WTC11 (cell line): ENCODE measurements at regions of chr10 and their contacts with region 1.

Region 1: GRCh38 chr10:70221030-70221429 is 12.2 kb downstream of the PPA1 start:
- DNase-seq: no peak
- ATAC-seq: no peak
- H3K4me3 Mint-ChIP-seq: no peak overlapping the region
- H3K27ac Mint-ChIP-seq: no peak overlapping the region
- H3K4me1 Mint-ChIP-seq: peaks cover 3% of the 10 kb centered on the region
- H3K27me3 Mint-ChIP-seq: no peaks in the 10 kb centered on the region
- CTCF ChIP-seq: no peak

Region 2: GRCh38 chr10:70093335-70093944 is 127.6 kb before region 1 on chr10:
- CTCF ChIA-PET with region 1: no interaction called
- POLR2A ChIA-PET with region 1: no interaction called
- DNase-seq: no peak
- ATAC-seq: no peak
- H3K4me3 Mint-ChIP-seq: no peak overlapping the region
- H3K27ac Mint-ChIP-seq: no peak overlapping the region
- H3K4me1 Mint-ChIP-seq: no peaks in the 10 kb centered on the region
- H3K27me3 Mint-ChIP-seq: no peaks in the 10 kb centered on the region
- CTCF ChIP-seq: no peak

Region 3: GRCh38 chr10:70233109-70233938 is 12.3 kb after region 1 on chr10 and contains the start of gene PPA1:
- CTCF ChIA-PET with region 1: interaction called, 48 read pairs
- POLR2A ChIA-PET with region 1: interaction called, 4 read pairs
- DNase-seq: peak; percentile 99
- ATAC-seq: peak; percentile 95
- H3K4me3 Mint-ChIP-seq: peak within 1 kb of the TSS; percentile 92
- H3K27ac Mint-ChIP-seq: peak within 1 kb of the TSS; percentile 73
- H3K4me1 Mint-ChIP-seq: peaks cover 8% of the 10 kb centered on the region
- H3K27me3 Mint-ChIP-seq: no peaks in the 10 kb centered on the region; the same call in 1 of the 2 replicates
- CTCF ChIP-seq: no peak
- total RNA-seq, gene PPA1: 140 to 180 TPM (median 144 TPM) in 3 replicates

Region 4: DNA sequence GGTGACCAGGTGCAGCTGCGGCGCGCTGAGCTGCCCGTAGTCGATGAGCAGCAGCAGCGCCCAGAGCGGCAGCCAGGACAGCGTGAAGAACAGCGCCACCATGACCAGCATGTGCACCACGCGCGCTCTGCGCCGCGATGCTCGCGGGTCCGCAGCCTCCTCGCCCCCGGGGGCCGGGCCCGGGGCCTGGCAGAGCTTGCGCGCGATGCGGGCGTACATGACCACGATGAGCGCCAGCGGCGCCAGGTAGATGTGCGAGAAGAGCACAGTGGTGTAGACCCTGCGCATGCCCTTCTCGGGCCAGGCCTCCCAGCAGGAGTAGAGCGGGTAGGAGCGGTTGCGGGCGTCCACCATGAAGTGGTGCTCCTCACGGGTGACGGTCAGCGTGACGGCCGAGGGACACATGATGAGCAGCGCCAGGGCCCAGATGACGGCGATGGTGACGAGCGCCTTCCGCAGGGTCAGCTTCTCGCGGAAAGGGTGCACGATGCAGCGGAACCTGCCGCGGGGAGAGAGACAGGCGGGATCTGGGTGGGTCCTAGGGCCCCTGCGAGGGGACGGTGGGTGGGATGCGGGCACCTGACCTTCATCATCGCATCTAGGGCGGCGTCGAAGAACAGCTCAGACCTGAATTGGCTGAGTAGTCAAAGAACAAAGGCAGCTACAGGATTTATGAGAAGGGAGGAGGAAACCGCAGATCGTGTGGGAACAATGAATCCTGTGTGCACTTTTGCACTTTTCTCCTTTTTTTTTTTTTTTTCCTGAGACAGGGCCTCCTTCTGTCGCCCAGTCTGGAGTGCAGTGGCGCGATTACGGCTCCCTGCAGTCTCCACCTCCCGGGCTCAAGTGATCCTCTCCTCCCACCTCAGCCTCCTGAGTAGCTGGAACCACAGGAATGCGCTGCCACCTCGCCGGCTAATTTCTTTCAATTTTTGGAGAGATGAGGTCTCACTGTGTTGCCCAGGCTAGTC is 34.6 kb after region 1 on chr10:
- CTCF ChIA-PET with region 1: interaction called, 16 read pairs
- POLR2A ChIA-PET with region 1: no interaction called
- DNase-seq: no peak
- ATAC-seq: no peak; the same call in 1 of the 2 replicates
- H3K4me3 Mint-ChIP-seq: no peak overlapping the region
- H3K27ac Mint-ChIP-seq: no peak overlapping the region
- H3K4me1 Mint-ChIP-seq: 0 out of 2 replicates have a peak, but pooled peaks cover 5% of the 10 kb centered on the region
- H3K27me3 Mint-ChIP-seq: peaks cover 6% of the 10 kb centered on the region; the same call in 1 of the 2 replicates
- CTCF ChIP-seq: no peak

Region 5: GRCh38 chr10:70272925-70273316 is 51.9 kb after region 1 on chr10:
- CTCF ChIA-PET with region 1: interaction called, 16 read pairs
- POLR2A ChIA-PET with region 1: no interaction called
- DNase-seq: no peak
- ATAC-seq: no peak
- H3K4me3 Mint-ChIP-seq: no peak overlapping the region
- H3K27ac Mint-ChIP-seq: no peak overlapping the region
- H3K4me1 Mint-ChIP-seq: peaks cover 16% of the 10 kb centered on the region
- H3K27me3 Mint-ChIP-seq: no peaks in the 10 kb centered on the region
- CTCF ChIP-seq: no peak

Region 6: GRCh38 chr10:70348228-70348850 is 127.3 kb after region 1 on chr10:
- CTCF ChIA-PET with region 1: interaction called, 48 read pairs
- POLR2A ChIA-PET with region 1: no interaction called
- DNase-seq: peak; percentile 64
- ATAC-seq: peak; percentile 98
- H3K4me3 Mint-ChIP-seq: no peak overlapping the region
- H3K27ac Mint-ChIP-seq: no peak overlapping the region
- H3K4me1 Mint-ChIP-seq: no peaks in the 10 kb centered on the region
- H3K27me3 Mint-ChIP-seq: no peaks in the 10 kb centered on the region
- CTCF ChIP-seq: no peak; the same call in 1 of the 2 replicates

Region 7: GRCh38 chr10:70355051-70356021 is 134.3 kb after region 1 on chr10:
- CTCF ChIA-PET with region 1: interaction called, 48 read pairs
- POLR2A ChIA-PET with region 1: no interaction called
- DNase-seq: no peak
- ATAC-seq: no peak
- H3K4me3 Mint-ChIP-seq: no peak overlapping the region
- H3K27ac Mint-ChIP-seq: peak overlapping the region; percentile 71; the same call in 1 of the 2 replicates
- H3K4me1 Mint-ChIP-seq: peaks cover 11% of the 10 kb centered on the region
- H3K27me3 Mint-ChIP-seq: no peaks in the 10 kb centered on the region
- CTCF ChIP-seq: no peak

Region 8: DNA sequence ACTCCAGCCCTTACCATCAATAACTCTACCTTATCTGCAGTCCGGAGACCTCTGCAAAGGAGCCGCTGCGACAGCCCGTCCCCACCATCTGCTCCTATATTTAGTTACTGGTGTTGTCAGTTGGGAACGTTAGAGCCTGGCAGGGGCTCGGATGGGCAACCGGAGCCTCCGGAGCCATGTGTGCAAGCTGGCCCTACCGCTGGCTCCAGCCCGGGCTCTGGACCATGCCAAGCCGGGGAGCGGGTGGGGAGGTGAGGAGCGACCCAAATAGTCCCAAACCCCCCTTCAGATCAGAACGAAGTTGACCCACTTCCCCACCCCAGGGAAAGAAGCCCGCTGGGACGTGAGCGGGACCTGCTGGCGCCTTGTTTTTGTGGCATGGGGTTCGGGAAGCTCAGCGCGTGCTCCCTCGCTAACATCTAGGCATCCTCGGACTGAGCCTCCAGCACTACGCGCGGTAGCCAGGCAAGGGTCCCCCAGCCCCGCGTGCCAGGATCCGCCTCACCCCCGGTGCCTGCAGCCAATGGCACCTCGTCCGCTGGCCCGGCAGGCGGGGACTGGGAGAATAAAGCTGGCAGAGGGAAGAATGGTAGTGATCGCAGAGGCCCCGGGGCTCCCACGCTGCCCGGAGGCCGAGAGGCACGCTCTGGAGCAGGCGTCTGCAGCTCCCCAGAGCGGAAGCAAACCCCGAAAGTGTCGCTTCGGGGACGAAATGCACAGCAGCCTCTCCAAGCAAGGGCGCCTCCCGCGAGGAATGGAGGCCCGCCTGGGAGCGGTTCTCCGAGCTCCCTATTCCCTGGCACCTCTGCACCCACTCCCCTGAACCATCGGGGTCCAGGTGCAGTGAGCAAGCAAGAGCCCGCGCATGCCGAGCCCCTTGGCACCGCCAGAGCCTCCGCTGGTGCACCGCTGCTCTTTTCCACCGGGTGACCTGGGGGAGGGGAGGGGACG is 160.7 kb after region 1 on chr10:
- CTCF ChIA-PET with region 1: interaction called, 28 read pairs
- POLR2A ChIA-PET with region 1: no interaction called
- DNase-seq: peak; percentile 62
- ATAC-seq: peak; percentile 16
- H3K4me3 Mint-ChIP-seq: peak overlapping the region; percentile 82
- H3K27ac Mint-ChIP-seq: no peak overlapping the region
- H3K4me1 Mint-ChIP-seq: peaks cover 46% of the 10 kb centered on the region
- H3K27me3 Mint-ChIP-seq: peaks cover 14% of the 10 kb centered on the region
- CTCF ChIP-seq: no peak